ENCODE measurements at regions of chr18 and their contacts with region 1.

Region 1: DNA sequence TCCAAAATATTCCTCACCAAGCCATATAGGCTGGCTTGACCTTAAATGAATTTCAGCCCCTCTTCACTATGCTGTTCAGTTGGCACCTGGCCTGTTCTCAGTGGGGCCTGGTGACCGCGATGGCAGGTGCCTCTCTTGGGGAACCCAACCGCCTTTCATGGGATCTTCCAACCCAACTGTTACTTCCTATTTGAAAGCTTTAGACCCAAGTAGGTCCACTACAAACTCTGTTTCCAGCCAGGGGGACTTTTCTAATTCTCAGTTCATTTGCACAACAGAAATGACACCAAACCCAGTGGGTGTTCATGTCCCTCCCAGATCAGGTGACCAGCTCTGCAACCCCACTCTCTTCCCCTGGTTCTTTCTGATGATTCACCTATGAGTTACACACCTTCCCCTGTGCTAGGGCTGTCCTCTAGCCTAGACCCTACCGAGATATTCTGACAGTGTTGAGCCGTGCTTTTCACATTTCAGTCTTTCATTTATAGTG is 35.6 kb upstream of the NDUFV2 start:
- DNase-seq: no peak
- ATAC-seq: no peak
- H3K4me3 ChIP-seq: no peak overlapping the region
- H3K27ac ChIP-seq: no peak overlapping the region
- H3K4me1 ChIP-seq: no peaks in the 10 kb centered on the region
- H3K27me3 ChIP-seq: no peaks in the 10 kb centered on the region

Region 2: GRCh38 chr18:8834881-8835280 is 232.0 kb before region 1 on chr18:
- intact Hi-C with region 1: no loop called
- DNase-seq: no peak
- ATAC-seq: no peak
- H3K4me3 ChIP-seq: no peak overlapping the region
- H3K27ac ChIP-seq: no peak overlapping the region
- H3K4me1 ChIP-seq: no peaks in the 10 kb centered on the region
- H3K27me3 ChIP-seq: no peaks in the 10 kb centered on the region

Region 3: GRCh38 chr18:8901019-8901418 is 165.8 kb before region 1 on chr18:
- intact Hi-C with region 1: no loop called
- DNase-seq: no peak
- ATAC-seq: no peak
- H3K4me3 ChIP-seq: no peak overlapping the region
- H3K27ac ChIP-seq: no peak overlapping the region
- H3K4me1 ChIP-seq: no peaks in the 10 kb centered on the region
- H3K27me3 ChIP-seq: no peaks in the 10 kb centered on the region

Region 4: GRCh38 chr18:9102508-9103375 is 35.9 kb after region 1 on chr18 and contains the start of gene NDUFV2:
- intact Hi-C with region 1: loop called in 1 of 2 experiments (anchors 2 kb)
- DNase-seq: peak; percentile 98 to 99
- ATAC-seq: peak; percentile 100
- H3K4me3 ChIP-seq: peak within 1 kb of the TSS; percentile 93 to 97
- H3K27ac ChIP-seq: peak within 1 kb of the TSS; percentile 76 to 96
- H3K4me1 ChIP-seq: peaks cover 4 to 5% of the 10 kb centered on the region in 2 donors
- H3K27me3 ChIP-seq: no peaks in the 10 kb centered on the region
- total RNA-seq, gene NDUFV2: 83.8 to 112 TPM

Region 5: DNA sequence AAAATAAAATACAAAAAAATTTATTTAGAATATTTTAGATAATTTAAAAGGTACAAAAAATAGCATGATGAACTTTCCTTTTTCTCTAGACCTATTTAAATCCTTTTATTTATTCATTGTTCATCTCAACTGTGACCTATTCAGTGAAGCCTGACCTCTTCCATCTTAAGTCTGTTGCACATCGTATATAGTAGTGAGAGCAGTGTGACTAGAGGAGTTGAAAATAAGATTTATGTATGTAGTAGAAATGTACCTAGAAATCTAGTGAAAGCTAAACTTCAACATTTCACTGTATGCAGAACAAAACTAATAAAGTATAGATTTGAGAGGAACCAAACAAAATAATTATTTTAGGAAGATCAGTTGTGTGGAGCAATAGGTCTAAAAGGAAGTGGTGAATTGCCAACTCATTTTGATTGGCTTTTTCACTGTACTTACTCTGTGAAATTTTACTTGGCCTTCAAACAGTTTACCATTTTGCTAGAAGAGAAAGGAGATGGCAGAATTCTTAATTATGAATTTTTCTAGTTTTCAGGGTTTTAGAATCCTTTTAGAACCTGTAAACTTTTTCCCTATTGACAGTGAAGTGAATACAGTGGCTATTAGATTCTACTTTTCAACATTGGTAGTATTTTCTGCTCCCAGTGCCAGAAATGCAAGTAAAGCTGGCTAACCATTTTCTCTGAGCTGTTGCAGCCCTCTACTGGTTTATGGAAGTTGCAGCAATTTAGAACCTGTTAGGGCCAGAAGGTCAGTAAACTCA is 80.8 kb after region 1 on chr18:
- intact Hi-C with region 1: loop called (anchors 2 kb)
- DNase-seq: no peak
- ATAC-seq: peak; percentile 87
- H3K4me3 ChIP-seq: no peak overlapping the region
- H3K27ac ChIP-seq: no peak overlapping the region
- H3K4me1 ChIP-seq: peaks cover 0 to 7% of the 10 kb centered on the region in 2 donors
- H3K27me3 ChIP-seq: no peaks in the 10 kb centered on the region

Region 6: GRCh38 chr18:9366192-9366591 is 299.3 kb after region 1 on chr18:
- intact Hi-C with region 1: no loop called
- DNase-seq: peak in 1 of 2 donors; percentile 51
- ATAC-seq: peak; percentile 73
- H3K4me3 ChIP-seq: no peak overlapping the region
- H3K27ac ChIP-seq: peak overlapping the region in 1 of 2 donors; percentile 75
- H3K4me1 ChIP-seq: peaks cover 0 to 7% of the 10 kb centered on the region in 2 donors
- H3K27me3 ChIP-seq: no peaks in the 10 kb centered on the region

Region 7: DNA sequence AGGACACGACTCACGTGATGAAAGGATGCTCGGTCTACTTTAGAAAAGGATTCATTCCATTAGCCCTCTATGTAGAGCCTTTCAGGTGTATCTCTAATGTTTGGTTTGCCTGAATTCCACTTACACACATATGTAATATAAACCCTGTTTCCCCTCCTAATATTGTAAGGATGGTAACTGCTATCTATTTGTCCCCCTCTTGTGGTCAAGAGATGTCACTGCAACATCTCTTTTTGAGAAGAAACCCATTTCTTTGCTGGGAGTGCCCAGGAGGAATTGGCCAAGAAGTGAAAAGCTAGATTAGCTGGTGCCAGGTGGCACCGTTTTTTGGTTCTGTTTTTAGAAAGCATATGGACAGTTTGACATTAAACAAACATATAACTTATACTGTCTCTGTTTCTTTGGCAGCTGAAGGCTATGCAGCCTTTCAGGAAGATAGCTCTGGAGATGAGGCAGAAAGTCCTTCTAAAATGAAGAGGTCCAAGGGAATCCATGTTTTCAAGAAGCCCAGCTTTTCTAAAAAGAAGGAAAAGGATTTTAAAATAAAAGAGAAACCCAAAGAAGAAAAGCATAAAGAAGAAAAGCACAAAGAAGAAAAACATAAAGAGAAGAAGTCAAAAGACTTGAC is 449.7 kb after region 1 on chr18:
- intact Hi-C with region 1: loop called in 1 of 2 experiments (anchors 5 kb)
- DNase-seq: no peak
- ATAC-seq: peak; percentile 78
- H3K4me3 ChIP-seq: no peak overlapping the region
- H3K27ac ChIP-seq: no peak overlapping the region
- H3K4me1 ChIP-seq: no peaks in the 10 kb centered on the region
- H3K27me3 ChIP-seq: no peaks in the 10 kb centered on the region

Measured in aorta (tissue), 5 donors.